GM12878 (cell line): ENCODE measurements at regions of chr13 and their contacts with region 1.

Region 1: GRCh38 chr13:30132623-30133553 is 174.5 kb downstream of the KATNAL1 start:
- DNase-seq: no peak
- ATAC-seq: peak; percentile 99
- H3K4me3 ChIP-seq: no peak overlapping the region
- H3K27ac ChIP-seq: no peak overlapping the region
- H3K4me1 ChIP-seq: no peaks in the 10 kb centered on the region
- H3K27me3 ChIP-seq: no peaks in the 10 kb centered on the region
- CTCF ChIP-seq: peak; percentile 89 to 95 (median 94)
- EP300 ChIP-seq: 0 out of 4 replicates have a peak, but pooled peaks of 1 of the 2 experiments have one; percentile 10
- POLR2A ChIP-seq: no peak
- RAD21 ChIP-seq: peak; percentile 97

Region 2: DNA sequence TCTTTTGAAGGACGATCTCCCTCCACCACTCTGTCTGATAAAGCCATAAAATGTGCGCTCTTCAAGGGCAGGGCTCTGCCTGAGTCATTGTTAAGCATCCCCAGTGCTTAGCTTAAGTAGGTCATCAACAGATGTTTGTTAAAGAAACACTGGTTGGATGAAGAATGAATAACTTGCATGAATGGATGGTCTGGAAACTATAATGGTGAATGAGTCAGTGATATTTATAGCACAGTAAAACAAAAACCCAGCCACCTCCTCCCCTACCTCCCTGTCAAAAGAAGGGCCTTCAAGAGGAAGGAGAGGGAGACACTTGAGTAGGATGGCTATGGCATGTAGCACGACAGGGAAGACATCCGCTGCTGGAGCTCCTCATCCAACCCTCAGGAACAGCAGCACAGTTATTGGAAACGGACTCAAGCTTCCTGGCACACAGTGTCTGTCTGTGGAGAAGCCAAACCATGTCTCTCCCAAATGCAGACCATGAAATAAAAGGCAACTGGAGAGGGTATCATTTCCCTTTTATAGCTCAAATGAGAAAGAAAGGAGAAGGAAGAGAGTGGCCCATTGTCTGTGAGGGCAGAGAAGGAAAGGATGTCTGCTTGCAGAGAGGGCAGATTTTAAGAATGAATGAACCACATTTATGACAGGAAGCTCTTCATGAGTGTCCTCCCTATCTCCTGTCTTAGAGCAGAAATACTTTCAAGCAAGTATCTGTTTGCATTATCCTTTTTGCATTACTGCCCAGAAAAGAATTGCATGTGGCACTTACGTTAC is 99.0 kb before region 1 on chr13:
- CTCF ChIA-PET with region 1: no interaction called
- POLR2A ChIA-PET with region 1: no interaction called
- RAD21 ChIA-PET with region 1: no interaction called
- SMC1A ChIA-PET with region 1: no interaction called
- in situ Hi-C with region 1: no loop called
- intact Hi-C with region 1: no loop called
- DNase-seq: no peak
- ATAC-seq: no peak
- H3K4me3 ChIP-seq: no peak overlapping the region
- H3K27ac ChIP-seq: no peak overlapping the region
- H3K4me1 ChIP-seq: no peaks in the 10 kb centered on the region
- H3K27me3 ChIP-seq: 0 out of 4 replicates have a peak, but pooled peaks cover 0 to 4% of the 10 kb centered on the region in 2 experiments
- CTCF ChIP-seq: no peak
- EP300 ChIP-seq: no peak
- POLR2A ChIP-seq: no peak
- RAD21 ChIP-seq: no peak

Region 3: GRCh38 chr13:30114571-30115256 is 18.2 kb before region 1 on chr13:
- CTCF ChIA-PET with region 1: interaction called, 31 read pairs
- POLR2A ChIA-PET with region 1: interaction called, 4 read pairs
- RAD21 ChIA-PET with region 1: interaction called, 19 read pairs
- SMC1A ChIA-PET with region 1: interaction called, 21 read pairs
- in situ Hi-C with region 1: no loop called
- intact Hi-C with region 1: no loop called
- DNase-seq: no peak
- ATAC-seq: peak; percentile 95
- H3K4me3 ChIP-seq: peak overlapping the region; percentile 63
- H3K27ac ChIP-seq: no peak overlapping the region
- H3K4me1 ChIP-seq: peaks cover 9% of the 10 kb centered on the region; the same call in 1 of the 2 replicates
- H3K27me3 ChIP-seq: no peaks in the 10 kb centered on the region
- CTCF ChIP-seq: peak; percentile 86 to 96 (median 95)
- EP300 ChIP-seq: peak in 1 of 2 experiments; percentile 19; a peak in 1 of 4 replicates
- POLR2A ChIP-seq: peak; percentile 84
- RAD21 ChIP-seq: peak; percentile 79

Region 4: DNA sequence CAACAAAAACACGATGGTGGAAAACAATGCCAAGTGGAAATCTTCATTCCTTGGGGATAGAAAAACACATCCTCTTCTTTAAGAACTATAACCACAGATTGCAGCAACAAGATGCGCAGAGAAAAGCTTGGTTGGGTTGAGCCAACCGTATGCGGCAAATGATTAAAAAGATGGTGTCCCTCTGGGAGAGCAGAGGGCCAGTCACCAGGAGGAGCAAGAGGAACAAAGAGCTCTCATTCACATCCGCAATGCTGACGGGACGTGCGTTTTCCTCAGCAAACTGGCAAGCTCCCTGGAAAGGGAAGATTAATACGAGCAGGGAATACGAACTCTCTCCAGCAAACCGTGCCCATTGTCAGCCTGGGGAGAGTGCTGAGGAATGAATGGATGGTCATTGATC is 32.9 kb after region 1 on chr13:
- CTCF ChIA-PET with region 1: interaction called, 93 read pairs
- POLR2A ChIA-PET with region 1: no interaction called
- RAD21 ChIA-PET with region 1: interaction called, 3 read pairs
- SMC1A ChIA-PET with region 1: interaction called, 17 read pairs
- in situ Hi-C with region 1: no loop called
- intact Hi-C with region 1: no loop called
- DNase-seq: no peak
- ATAC-seq: no peak
- H3K4me3 ChIP-seq: no peak overlapping the region
- H3K27ac ChIP-seq: no peak overlapping the region
- H3K4me1 ChIP-seq: peaks cover 6% of the 10 kb centered on the region; the same call in 1 of the 2 replicates
- H3K27me3 ChIP-seq: no peaks in the 10 kb centered on the region
- CTCF ChIP-seq: no peak
- EP300 ChIP-seq: no peak
- POLR2A ChIP-seq: no peak
- RAD21 ChIP-seq: no peak

Region 5: DNA sequence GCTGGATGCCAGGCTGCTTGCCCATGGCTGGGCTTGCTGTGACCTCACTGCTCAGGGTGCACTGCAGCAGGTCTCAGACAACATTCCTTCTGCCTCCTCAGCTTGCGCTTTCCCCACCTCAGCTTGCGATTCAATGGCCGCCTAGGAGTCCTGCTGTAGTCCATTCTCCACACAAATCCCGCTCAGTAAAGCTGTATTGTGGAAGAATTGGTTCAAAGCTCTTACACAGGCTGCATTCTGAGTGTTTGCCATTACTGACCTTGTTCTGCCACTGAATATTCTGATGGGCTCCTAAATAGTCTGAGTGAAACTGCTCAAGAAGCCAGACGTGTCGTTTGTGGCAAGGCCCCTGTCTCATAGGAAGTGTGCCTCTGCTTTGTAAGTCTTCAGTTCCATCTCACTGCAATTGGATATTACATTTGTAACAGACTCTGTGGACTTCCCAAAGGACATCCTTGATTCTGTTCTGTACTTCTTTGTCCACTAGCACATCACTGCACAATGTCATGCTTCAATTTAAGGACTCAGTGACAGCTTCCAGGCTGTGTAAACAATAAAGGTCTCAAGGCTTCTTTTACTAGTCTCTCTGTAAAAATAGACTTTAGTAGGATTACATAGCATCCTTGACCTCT is 124.7 kb after region 1 on chr13:
- CTCF ChIA-PET with region 1: no interaction called
- POLR2A ChIA-PET with region 1: no interaction called
- RAD21 ChIA-PET with region 1: no interaction called
- SMC1A ChIA-PET with region 1: interaction called, 10 read pairs
- in situ Hi-C with region 1: no loop called
- intact Hi-C with region 1: loop called (anchors 5 kb)
- DNase-seq: no peak
- ATAC-seq: peak; percentile 55
- H3K4me3 ChIP-seq: no peak overlapping the region
- H3K27ac ChIP-seq: no peak overlapping the region
- H3K4me1 ChIP-seq: peaks cover 11% of the 10 kb centered on the region
- H3K27me3 ChIP-seq: no peaks in the 10 kb centered on the region
- CTCF ChIP-seq: no peak
- EP300 ChIP-seq: no peak
- POLR2A ChIP-seq: no peak
- RAD21 ChIP-seq: no peak

Region 6: GRCh38 chr13:30346153-30346788 is 213.4 kb after region 1 on chr13:
- CTCF ChIA-PET with region 1: interaction called, 9 read pairs
- POLR2A ChIA-PET with region 1: no interaction called
- RAD21 ChIA-PET with region 1: interaction called, 11 read pairs
- SMC1A ChIA-PET with region 1: interaction called, 8 read pairs
- in situ Hi-C with region 1: no loop called
- intact Hi-C with region 1: no loop called
- DNase-seq: peak; percentile 64
- ATAC-seq: peak; percentile 89
- H3K4me3 ChIP-seq: no peak overlapping the region
- H3K27ac ChIP-seq: no peak overlapping the region
- H3K4me1 ChIP-seq: peaks cover 15% of the 10 kb centered on the region
- H3K27me3 ChIP-seq: no peaks in the 10 kb centered on the region
- CTCF ChIP-seq: no peak
- EP300 ChIP-seq: no peak
- POLR2A ChIP-seq: no peak
- RAD21 ChIP-seq: no peak

Region 7: DNA sequence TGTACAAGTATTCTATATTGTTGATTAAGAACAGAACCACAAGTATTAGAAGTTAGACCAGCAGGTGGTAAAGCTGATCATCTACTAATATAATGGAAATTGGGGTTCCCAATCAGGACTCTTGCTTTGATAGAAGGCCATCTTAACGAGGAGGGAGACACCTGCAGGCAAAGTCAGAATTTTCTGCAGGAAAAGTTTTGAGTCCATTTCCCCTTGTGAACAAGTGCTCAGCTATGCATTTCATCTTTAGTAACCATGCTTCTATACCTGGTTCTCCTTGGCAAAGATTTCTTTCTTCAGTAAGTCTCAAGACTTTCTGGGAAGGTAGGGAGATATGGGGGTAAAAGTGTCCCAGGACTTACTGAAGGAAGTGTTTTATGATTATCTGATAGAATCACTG is 448.7 kb after region 1 on chr13:
- CTCF ChIA-PET with region 1: interaction called, 31 read pairs
- POLR2A ChIA-PET with region 1: no interaction called
- RAD21 ChIA-PET with region 1: interaction called, 27 read pairs
- SMC1A ChIA-PET with region 1: interaction called, 10 read pairs
- in situ Hi-C with region 1: no loop called
- intact Hi-C with region 1: loop called (anchors 2 kb)
- DNase-seq: no peak
- ATAC-seq: peak; percentile 20; the same call in 1 of the 3 replicates
- H3K4me3 ChIP-seq: no peak overlapping the region
- H3K27ac ChIP-seq: no peak overlapping the region
- H3K4me1 ChIP-seq: peaks cover 12% of the 10 kb centered on the region; the same call in 1 of the 2 replicates
- H3K27me3 ChIP-seq: peaks cover 2 to 3% of the 10 kb centered on the region in 2 experiments; a peak in 1 of 4 replicates
- CTCF ChIP-seq: peak; percentile 26 to 62 (median 50); a peak in 5 of 6 replicates
- EP300 ChIP-seq: no peak
- POLR2A ChIP-seq: no peak
- RAD21 ChIP-seq: peak; percentile 69